Activated CD4-positive, alpha-beta T cell treated with anti-CD3 and anti-CD28 coated beads for 36 hours (primary cell): ENCODE measurements at regions of chr17 and their contacts with region 1.

Region 1: DNA sequence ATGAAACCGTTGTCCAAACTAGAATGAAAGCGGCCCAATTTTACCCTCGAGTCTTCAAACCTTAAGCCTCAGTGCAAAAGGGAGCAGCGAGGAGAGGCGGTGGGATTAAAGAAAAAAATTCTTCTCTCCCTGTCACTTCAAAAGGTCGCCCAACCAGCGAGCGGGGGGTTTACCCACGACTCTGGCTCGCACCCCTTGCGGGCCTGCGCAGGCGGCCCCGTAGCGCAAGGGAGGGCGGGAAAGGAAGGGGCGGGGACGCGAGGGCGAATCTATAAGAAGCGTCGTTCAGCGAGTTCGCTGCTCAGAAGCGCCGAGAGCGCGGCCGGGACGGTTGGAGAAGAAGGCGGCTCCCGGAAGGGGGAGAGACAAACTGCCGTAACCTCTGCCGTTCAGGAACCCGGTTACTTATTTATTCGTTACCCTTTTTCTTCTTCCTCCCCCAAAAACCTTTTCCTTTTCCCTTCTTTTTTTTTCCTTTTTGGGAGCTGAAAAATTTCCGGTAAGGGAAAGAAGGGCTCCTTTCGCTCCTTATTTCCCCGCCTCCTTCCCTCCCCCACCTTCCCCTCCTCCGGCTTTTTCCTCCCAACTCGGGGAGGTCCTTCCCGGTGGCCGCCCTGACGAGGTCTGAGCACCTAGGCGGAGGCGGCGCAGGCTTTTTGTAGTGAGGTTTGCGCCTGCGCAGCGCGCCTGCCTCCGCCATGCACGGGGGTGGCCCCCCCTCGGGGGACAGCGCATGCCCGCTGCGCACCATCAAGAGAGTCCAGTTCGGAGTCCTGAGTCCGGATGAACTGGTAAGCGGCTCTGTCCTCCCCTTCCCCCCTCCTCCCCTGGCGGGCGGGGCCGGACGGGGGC is at the start of gene POLR2A:
- DNase-seq: peak; percentile 98
- ATAC-seq: peak; percentile 71
- H3K4me3 Mint-ChIP-seq: peak within 1 kb of the TSS; percentile 99
- H3K27ac Mint-ChIP-seq: peak within 1 kb of the TSS; percentile 100
- H3K4me1 Mint-ChIP-seq: peaks cover 71% of the 10 kb centered on the region
- H3K27me3 Mint-ChIP-seq: no peaks in the 10 kb centered on the region
- total RNA-seq, gene POLR2A: 193 to 203 TPM

Region 2: GRCh38 chr17:7214300-7215135 is 269.8 kb before region 1 on chr17:
- CTCF ChIA-PET with region 1: no interaction called
- POLR2A ChIA-PET with region 1: no interaction called
- intact Hi-C with region 1: loop called in 1 of 2 experiments (anchors 1 kb)
- DNase-seq: peak; percentile 100
- ATAC-seq: peak; percentile 82
- H3K4me3 Mint-ChIP-seq: peak overlapping the region; percentile 81
- H3K27ac Mint-ChIP-seq: peak overlapping the region; percentile 93
- H3K4me1 Mint-ChIP-seq: peaks cover 71% of the 10 kb centered on the region
- H3K27me3 Mint-ChIP-seq: peaks cover 7% of the 10 kb centered on the region

Region 3: GRCh38 chr17:7306911-7307686 is 177.2 kb before region 1 on chr17 and contains the start of gene EIF5A:
- CTCF ChIA-PET with region 1: no interaction called
- POLR2A ChIA-PET with region 1: no interaction called
- intact Hi-C with region 1: loop called (anchors 1 to 2 kb)
- DNase-seq: peak; percentile 100
- ATAC-seq: peak; percentile 86
- H3K4me3 Mint-ChIP-seq: peak within 1 kb of the TSS; percentile 96
- H3K27ac Mint-ChIP-seq: peak within 1 kb of the TSS; percentile 100
- H3K4me1 Mint-ChIP-seq: peaks cover 36% of the 10 kb centered on the region
- H3K27me3 Mint-ChIP-seq: no peaks in the 10 kb centered on the region
- total RNA-seq, gene EIF5A: 780 to 934 TPM

Region 4: GRCh38 chr17:7435221-7435675 is 49.0 kb before region 1 on chr17 and contains the start of gene TMEM102:
- CTCF ChIA-PET with region 1: interaction called, 16 read pairs
- POLR2A ChIA-PET with region 1: interaction called, 10 read pairs
- intact Hi-C with region 1: loop called (anchors 1 kb)
- DNase-seq: peak; percentile 99
- ATAC-seq: peak; percentile 84
- H3K4me3 Mint-ChIP-seq: peak within 1 kb of the TSS; percentile 92
- H3K27ac Mint-ChIP-seq: peak within 1 kb of the TSS; percentile 92
- H3K4me1 Mint-ChIP-seq: peaks cover 33% of the 10 kb centered on the region
- H3K27me3 Mint-ChIP-seq: peaks cover 11% of the 10 kb centered on the region
- total RNA-seq, gene TMEM102: 8.7 to 10.7 TPM

Region 5: GRCh38 chr17:7561028-7561575 is 76.8 kb after region 1 on chr17:
- CTCF ChIA-PET with region 1: interaction called, 7 read pairs
- POLR2A ChIA-PET with region 1: interaction called, 4 read pairs
- intact Hi-C with region 1: loop called in 1 of 2 experiments (anchors 1 kb)
- DNase-seq: peak; percentile 92
- ATAC-seq: peak; percentile 75
- H3K4me3 Mint-ChIP-seq: peak overlapping the region; percentile 79
- H3K27ac Mint-ChIP-seq: peak overlapping the region; percentile 87
- H3K4me1 Mint-ChIP-seq: peaks cover 46% of the 10 kb centered on the region
- H3K27me3 Mint-ChIP-seq: no peaks in the 10 kb centered on the region

Region 6: GRCh38 chr17:7729816-7730215 is 245.5 kb after region 1 on chr17:
- CTCF ChIA-PET with region 1: no interaction called
- POLR2A ChIA-PET with region 1: no interaction called
- intact Hi-C with region 1: no loop called
- DNase-seq: no peak
- ATAC-seq: no peak
- H3K4me3 Mint-ChIP-seq: no peak overlapping the region
- H3K27ac Mint-ChIP-seq: no peak overlapping the region
- H3K4me1 Mint-ChIP-seq: no peaks in the 10 kb centered on the region
- H3K27me3 Mint-ChIP-seq: peaks cover 9% of the 10 kb centered on the region

Region 7: DNA sequence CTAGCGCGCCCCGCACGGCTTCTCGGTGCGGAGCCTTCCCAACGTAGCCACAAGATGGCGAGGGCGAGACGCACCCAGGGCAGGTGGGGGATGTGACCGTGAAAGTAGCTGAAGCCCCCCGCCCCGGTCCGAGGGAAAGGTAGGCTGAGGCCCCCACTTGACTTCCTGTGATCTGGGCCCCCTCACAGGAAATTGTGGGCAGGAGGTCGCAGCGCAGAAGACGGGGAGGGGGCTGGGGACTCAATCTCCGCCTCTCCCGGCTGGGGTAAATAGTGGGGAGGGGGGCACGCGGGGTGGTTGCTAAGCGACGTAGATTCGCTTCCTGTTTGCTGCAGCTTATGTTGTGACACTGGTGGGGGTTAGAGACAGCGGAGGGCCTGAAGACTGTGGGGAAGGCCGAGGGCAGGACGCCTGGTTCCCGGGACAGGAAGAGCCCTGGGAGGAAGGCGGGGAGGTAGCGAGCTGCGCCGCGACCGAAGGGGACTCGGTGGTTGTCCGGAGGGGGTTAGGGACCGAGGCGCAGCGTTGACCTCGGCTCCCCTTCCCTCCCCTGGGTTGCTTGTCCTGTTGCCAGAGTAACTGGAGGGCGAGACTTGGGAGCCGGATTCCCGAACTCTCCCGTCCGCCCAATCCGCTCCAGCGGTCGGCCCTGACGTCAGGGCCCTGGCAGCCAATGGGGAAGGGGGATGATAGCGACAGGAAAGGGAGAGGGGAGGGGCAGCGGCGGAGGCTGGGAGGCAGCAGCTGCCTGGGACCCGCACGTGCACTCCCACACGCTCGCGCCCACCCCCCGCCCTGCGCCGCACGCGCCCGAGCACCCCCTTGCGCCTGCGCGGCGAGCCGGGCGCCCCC is 350.9 kb after region 1 on chr17:
- CTCF ChIA-PET with region 1: no interaction called
- POLR2A ChIA-PET with region 1: no interaction called
- intact Hi-C with region 1: loop called (anchors 2 to 10 kb)
- DNase-seq: peak; percentile 96
- ATAC-seq: peak; percentile 57
- H3K4me3 Mint-ChIP-seq: peak overlapping the region; percentile 93
- H3K27ac Mint-ChIP-seq: peak overlapping the region; percentile 91
- H3K4me1 Mint-ChIP-seq: peaks cover 42% of the 10 kb centered on the region
- H3K27me3 Mint-ChIP-seq: no peaks in the 10 kb centered on the region

Region 8: DNA sequence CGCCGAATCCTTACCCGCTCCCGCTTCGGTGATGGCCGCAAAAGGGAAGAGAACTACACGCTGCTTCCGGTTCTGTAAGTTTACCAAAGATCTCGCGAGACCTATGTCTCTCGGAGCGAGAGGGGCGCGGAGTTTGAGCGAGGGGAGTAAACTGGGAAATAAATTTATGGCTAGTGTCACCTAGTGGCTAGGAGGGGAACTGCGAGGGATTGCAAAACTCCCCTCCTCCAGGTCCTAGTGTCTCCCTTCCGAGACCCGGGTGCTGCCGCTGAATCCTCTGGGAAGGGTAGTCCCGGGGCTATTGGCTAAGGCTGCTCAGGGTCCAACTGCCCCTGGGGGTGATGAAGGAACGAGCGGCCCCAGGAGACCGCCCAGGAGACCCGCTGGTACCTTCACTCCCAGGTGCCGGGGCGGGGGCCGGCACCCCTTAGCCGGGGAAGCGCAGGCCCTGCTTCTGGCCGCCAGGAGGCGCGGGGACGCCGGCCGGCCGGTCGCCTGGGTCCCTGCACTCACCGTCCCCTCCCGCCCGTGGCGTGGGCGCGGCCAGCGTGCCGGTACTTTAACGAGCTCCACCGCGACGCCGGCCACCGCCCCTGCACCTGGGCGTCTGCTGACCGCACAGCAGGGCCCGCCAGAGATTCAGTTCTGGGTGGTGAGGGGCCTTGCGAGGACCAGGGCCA is 899.0 kb after region 1 on chr17 and contains the start of gene RPL26:
- CTCF ChIA-PET with region 1: no interaction called
- POLR2A ChIA-PET with region 1: no interaction called
- intact Hi-C with region 1: loop called in 1 of 2 experiments (anchors 5 kb)
- DNase-seq: peak; percentile 96
- ATAC-seq: peak; percentile 92
- H3K4me3 Mint-ChIP-seq: peak within 1 kb of the TSS; percentile 100
- H3K27ac Mint-ChIP-seq: peak within 1 kb of the TSS; percentile 99
- H3K4me1 Mint-ChIP-seq: peaks cover 50% of the 10 kb centered on the region
- H3K27me3 Mint-ChIP-seq: no peaks in the 10 kb centered on the region
- total RNA-seq, gene RPL26: 3,064 to 3,721 TPM